Uterus (tissue), 4 donors: ENCODE measurements at regions of chr11 and their contacts with region 1.

Region 1: DNA sequence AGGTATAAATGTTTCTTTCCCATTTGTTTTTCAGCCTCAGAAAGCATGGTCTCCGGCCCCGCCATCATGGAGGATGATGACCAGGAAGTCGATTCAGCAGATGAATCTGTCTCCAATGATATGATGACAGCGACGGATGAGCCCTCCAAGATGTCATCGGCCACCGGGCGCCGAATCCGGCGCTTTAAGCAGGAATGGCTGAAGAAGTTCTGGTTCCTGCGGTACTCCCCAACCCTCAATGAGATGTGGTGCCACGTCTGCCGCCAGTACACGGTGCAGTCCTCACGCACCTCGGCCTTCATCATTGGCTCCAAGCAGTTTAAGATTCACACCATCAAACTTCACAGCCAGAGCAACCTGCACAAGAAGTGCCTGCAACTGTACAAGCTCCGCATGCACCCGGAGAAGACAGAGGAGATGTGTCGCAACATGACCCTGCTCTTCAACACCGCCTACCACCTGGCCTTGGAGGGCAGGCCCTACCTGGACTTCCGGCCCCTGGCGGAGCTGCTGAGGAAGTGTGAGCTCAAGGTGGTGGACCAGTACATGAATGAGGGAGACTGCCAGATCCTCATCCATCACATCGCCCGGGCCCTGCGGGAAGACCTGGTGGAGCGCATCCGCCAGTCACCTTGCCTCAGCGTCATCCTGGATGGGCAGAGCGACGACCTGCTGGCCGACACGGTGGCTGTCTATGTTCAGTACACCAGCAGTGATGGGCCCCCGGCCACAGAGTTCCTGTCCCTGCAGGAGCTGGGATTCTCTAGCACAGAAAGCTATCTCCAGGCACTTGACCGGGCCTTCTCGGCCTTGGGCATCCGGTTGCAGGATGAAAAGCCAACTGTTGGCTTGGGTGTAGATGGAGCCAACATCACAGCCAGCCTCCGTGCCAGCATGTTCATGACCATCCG is 59.9 kb downstream of the SYT13 start:
- DNase-seq: no peak
- H3K4me3 ChIP-seq: no peak overlapping the region
- H3K27ac ChIP-seq: no peak overlapping the region
- H3K4me1 ChIP-seq: no peaks in the 10 kb centered on the region
- H3K27me3 ChIP-seq: no peaks in the 10 kb centered on the region
- CTCF ChIP-seq: no peak
- POLR2A ChIP-seq: no peak

Region 2: DNA sequence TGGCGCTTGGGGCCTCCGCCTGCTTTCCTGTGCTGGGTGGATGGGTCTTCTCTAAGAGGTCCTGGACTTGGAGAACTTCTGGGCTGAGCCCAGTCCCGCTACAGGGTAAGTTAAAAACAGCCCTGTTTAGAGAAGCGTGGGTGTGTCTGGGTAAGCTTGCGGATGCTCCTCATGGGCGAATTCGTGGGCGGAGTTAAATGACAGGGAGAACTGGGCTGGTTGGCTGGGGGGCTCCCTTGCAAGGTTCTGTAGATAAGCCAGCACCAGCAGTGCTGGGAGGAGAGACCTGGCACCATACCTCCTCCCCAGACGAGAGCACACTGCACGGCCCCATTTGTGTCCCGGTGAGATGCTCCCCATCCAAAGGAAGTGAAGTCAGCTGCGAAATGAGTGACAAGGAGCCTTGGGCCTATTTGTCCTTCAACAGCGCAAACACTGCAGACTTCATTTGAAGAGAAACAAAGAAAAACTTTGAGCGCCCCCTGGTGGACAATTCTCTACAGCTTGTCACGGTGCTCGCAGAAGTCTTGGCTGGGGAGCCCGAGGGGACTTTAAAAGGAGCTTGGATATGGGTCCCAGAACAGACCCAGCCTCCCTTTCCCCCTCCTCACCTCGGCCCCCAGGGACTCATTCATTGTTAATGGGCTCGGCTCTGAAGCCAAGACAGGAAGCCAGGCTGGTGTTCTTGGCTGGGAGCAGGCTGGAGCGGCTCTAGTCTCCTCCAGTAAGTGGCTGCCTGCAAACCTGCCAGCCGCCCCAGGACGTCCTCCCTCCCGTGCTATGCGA is 315.0 kb before region 1 on chr11:
- intact Hi-C with region 1: no loop called
- DNase-seq: peak; percentile 82 to 93
- H3K4me3 ChIP-seq: no peak overlapping the region
- H3K27ac ChIP-seq: peak overlapping the region; percentile 5 to 22
- H3K4me1 ChIP-seq: no peaks in the 10 kb centered on the region
- H3K27me3 ChIP-seq: no peaks in the 10 kb centered on the region
- CTCF ChIP-seq: peak; percentile 77 to 86 (median 82)
- POLR2A ChIP-seq: no peak

Region 3: GRCh38 chr11:45247433-45247832 is 21.2 kb after region 1 on chr11:
- intact Hi-C with region 1: loop called (anchors 2 kb)
- DNase-seq: no peak
- H3K4me3 ChIP-seq: no peak overlapping the region
- H3K27ac ChIP-seq: no peak overlapping the region
- H3K4me1 ChIP-seq: no peaks in the 10 kb centered on the region
- H3K27me3 ChIP-seq: no peaks in the 10 kb centered on the region
- CTCF ChIP-seq: no peak
- POLR2A ChIP-seq: no peak

Region 4: GRCh38 chr11:45518141-45518832 is 292.1 kb after region 1 on chr11:
- intact Hi-C with region 1: no loop called
- DNase-seq: no peak
- H3K4me3 ChIP-seq: no peak overlapping the region
- H3K27ac ChIP-seq: no peak overlapping the region
- H3K4me1 ChIP-seq: no peaks in the 10 kb centered on the region
- H3K27me3 ChIP-seq: no peaks in the 10 kb centered on the region
- CTCF ChIP-seq: no peak
- POLR2A ChIP-seq: no peak

Region 5: GRCh38 chr11:45646275-45646970 is 420.2 kb after region 1 on chr11:
- intact Hi-C with region 1: no loop called
- DNase-seq: no peak
- H3K4me3 ChIP-seq: no peak overlapping the region
- H3K27ac ChIP-seq: no peak overlapping the region
- H3K4me1 ChIP-seq: no peaks in the 10 kb centered on the region
- H3K27me3 ChIP-seq: no peaks in the 10 kb centered on the region
- CTCF ChIP-seq: no peak
- POLR2A ChIP-seq: no peak

Region 6: GRCh38 chr11:45676522-45677095 is 450.4 kb after region 1 on chr11:
- intact Hi-C with region 1: no loop called
- DNase-seq: no peak
- H3K4me3 ChIP-seq: no peak overlapping the region
- H3K27ac ChIP-seq: no peak overlapping the region
- H3K4me1 ChIP-seq: no peaks in the 10 kb centered on the region
- H3K27me3 ChIP-seq: no peaks in the 10 kb centered on the region
- CTCF ChIP-seq: no peak
- POLR2A ChIP-seq: no peak